Spleen (tissue), 13 donors: ENCODE measurements at regions of chr3 and their contacts with region 1.

Region 1: GRCh38 chr3:112519424-112520001 is 20.2 kb upstream of the BTLA start:
- DNase-seq: no peak
- H3K4me3 ChIP-seq: no peak overlapping the region
- H3K27ac ChIP-seq: peak overlapping the region in 1 of 8 donors; percentile 40
- H3K4me1 ChIP-seq: peaks cover 0 to 25% (median under 1%) of the 10 kb centered on the region in 6 donors
- H3K27me3 ChIP-seq: no peaks in the 10 kb centered on the region
- CTCF ChIP-seq: peak; percentile 52 to 78 (median 69)
- POLR2A ChIP-seq: no peak

Region 2: GRCh38 chr3:112101916-112102315 is 417.6 kb before region 1 on chr3:
- intact Hi-C with region 1: loop called (anchors 10 kb)
- DNase-seq: no peak
- H3K4me3 ChIP-seq: no peak overlapping the region
- H3K27ac ChIP-seq: no peak overlapping the region
- H3K4me1 ChIP-seq: no peaks in the 10 kb centered on the region
- H3K27me3 ChIP-seq: no peaks in the 10 kb centered on the region
- CTCF ChIP-seq: no peak
- POLR2A ChIP-seq: no peak

Region 3: DNA sequence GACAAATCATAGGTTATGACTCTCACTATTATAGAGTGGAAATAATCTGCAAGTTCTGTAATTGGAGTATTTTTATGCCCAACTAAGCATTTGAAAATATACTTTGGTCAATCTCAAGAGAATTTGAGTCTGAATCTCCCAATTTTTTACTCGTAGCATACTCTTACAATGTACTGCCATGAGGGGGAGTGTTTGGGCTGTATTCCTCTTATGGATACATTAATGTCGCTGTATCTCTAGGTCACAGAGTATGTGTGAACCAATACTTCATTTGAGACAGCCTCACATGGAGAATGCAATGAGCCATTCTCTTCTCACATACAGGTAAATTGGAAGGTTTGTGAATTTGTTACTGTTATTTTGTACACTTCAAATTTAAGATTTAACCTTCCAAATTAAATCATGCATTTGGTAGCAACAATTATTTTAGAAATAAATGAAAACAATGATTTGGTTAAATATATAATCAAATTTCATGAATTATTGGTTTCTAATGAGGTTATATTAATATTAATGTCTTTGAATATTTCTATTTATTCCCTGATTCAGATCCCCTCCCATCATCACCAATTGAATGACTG is 192.1 kb before region 1 on chr3:
- intact Hi-C with region 1: loop called (anchors 5 kb)
- DNase-seq: no peak
- H3K4me3 ChIP-seq: no peak overlapping the region
- H3K27ac ChIP-seq: no peak overlapping the region
- H3K4me1 ChIP-seq: peaks cover 0 to 7% (median 3%) of the 10 kb centered on the region in 6 donors
- H3K27me3 ChIP-seq: peaks cover 0 to 3% (median 0%) of the 10 kb centered on the region in 7 donors
- CTCF ChIP-seq: peak; percentile 38 to 73 (median 64)
- POLR2A ChIP-seq: no peak

Region 4: DNA sequence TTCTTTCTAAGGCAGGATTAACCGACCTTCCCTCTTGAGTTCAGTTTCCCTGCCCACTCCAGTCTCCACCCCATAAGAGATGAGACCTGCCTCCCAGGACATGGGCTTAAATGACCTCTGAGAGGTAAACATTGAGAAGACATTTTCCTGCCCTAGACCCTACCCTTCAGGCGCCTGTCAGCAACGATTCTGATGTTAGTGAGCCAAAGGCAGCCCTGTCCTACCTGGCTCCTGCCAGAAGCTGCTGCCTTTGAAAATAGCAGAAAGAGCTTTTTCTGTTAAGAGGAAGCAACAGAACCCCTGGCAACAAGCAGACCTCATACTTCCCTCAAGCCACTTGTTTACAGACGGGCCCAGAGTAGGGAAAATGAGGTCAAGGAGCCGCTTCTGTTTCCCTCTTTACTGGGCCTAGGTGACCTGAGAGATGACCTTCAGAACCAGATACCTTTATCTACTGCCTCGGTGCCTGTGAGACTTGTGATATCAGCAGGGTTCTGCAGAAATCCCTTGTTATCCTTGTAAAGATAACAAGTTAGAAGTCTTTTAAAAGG is 275.2 kb after region 1 on chr3:
- intact Hi-C with region 1: no loop called
- DNase-seq: no peak
- H3K4me3 ChIP-seq: no peak overlapping the region
- H3K27ac ChIP-seq: peak overlapping the region in 2 of 8 donors; percentile 26 to 45
- H3K4me1 ChIP-seq: peaks cover 3 to 28% (median 20%) of the 10 kb centered on the region in 6 donors
- H3K27me3 ChIP-seq: no peaks in the 10 kb centered on the region
- CTCF ChIP-seq: no peak
- POLR2A ChIP-seq: no peak